ENCODE measurements at regions of chr21 and their contacts with region 1.

Region 1: DNA sequence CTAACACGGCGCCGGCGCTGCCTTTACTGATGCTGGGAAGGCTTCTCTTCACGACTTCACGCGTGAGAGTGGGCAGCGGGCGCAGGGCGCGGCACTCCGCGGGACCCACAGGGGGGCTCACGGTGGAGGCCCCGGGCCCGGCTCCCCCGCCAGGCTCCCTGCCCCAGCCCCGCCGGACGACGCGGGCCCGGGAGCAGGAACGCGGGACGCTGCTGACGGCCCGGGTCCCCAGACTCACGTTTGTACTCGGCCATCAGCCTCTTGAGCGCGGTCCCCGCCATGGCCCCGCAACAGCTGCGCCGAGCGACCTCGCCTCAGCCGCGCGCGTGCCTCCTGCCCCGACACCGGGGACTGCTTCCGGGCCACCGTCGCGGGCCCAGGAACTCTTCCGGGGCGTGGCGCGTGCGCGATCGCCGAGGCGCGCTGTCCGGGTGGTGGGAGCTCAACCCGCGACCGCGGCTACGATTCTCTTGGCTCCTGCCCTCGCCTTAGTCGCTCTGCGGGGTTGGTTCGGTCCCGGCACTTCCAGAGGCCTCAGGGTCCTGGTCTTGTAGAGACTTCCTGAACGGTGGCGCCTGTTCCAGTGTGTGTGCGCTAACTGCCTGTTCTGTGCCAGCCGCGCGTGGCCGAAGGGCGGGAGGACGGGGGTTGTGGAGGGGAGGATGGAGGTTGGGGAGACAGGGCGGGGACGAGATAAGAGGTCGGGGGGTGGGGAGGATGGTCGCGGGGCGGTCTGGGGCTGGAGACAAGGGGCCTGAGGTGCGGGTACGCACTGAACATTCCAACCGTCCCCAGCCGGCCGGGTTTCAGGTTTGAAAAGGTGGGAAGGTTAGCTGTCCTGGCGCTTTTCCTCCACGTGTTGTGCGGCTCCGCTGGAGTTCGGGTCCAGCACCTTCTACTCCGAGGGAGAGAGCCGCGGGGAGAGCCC is at the start of gene UBE2G2:
- DNase-seq: peak; percentile 84
- ATAC-seq: peak; percentile 94
- H3K4me3 Mint-ChIP-seq: peak within 1 kb of the TSS; percentile 99
- H3K27ac Mint-ChIP-seq: peak within 1 kb of the TSS; percentile 95
- H3K4me1 Mint-ChIP-seq: peaks cover 51% of the 10 kb centered on the region
- H3K27me3 Mint-ChIP-seq: no peaks in the 10 kb centered on the region
- CTCF ChIP-seq: peak; percentile 31
- total RNA-seq, gene UBE2G2: 113 to 115 TPM

Region 2: GRCh38 chr21:44510508-44511210 is 291.1 kb before region 1 on chr21:
- CTCF ChIA-PET with region 1: interaction called, 10 read pairs
- POLR2A ChIA-PET with region 1: no interaction called
- intact Hi-C with region 1: no loop called
- DNase-seq: peak; percentile 78
- ATAC-seq: peak; percentile 90
- H3K4me3 Mint-ChIP-seq: peak overlapping the region; percentile 27
- H3K27ac Mint-ChIP-seq: no peak overlapping the region
- H3K4me1 Mint-ChIP-seq: peaks cover 4% of the 10 kb centered on the region
- H3K27me3 Mint-ChIP-seq: no peaks in the 10 kb centered on the region
- CTCF ChIP-seq: peak; percentile 93

Region 3: DNA sequence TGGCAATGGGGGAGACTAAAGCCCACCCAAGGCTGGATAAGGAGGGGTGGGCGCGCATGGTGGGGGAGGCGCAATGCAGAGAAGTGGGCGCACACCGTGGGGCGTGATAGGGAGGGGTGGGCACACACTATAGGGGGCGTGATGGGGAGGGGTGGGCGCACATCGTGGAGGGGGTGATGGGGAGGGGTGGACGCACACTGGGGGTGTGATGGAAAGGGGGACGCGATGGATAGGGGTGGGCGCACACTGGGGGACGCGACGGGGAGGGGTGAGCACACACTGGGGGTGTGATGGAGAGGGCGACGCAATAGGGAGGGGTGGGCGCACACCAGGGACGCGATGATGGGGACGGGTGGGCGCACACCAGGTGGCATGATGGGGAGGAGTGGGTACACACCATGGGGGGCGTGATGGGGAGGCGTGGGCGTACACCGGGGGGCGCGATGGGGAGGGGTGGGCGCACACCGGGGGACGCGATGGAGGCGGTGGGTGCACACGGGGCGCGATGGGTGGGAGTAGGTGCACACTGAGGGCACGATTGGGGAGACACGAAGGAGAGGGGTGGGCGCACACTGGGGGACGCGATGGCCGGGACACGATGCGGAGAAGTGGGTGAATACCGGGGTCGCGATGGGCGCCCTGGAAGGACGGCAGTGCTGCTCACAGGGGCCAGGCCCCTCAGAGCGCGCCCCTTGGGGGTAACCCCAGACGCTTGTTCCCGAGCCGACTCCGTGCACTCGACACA is 15.2 kb after region 1 on chr21:
- CTCF ChIA-PET with region 1: interaction called, 11 read pairs
- POLR2A ChIA-PET with region 1: interaction called, 21 read pairs
- intact Hi-C with region 1: no loop called
- DNase-seq: no peak
- ATAC-seq: no peak
- H3K4me3 Mint-ChIP-seq: peak overlapping the region; percentile 74
- H3K27ac Mint-ChIP-seq: no peak overlapping the region
- H3K4me1 Mint-ChIP-seq: peaks cover 19% of the 10 kb centered on the region
- H3K27me3 Mint-ChIP-seq: no peaks in the 10 kb centered on the region
- CTCF ChIP-seq: no peak

Region 4: GRCh38 chr21:44834936-44835646 is 33.4 kb after region 1 on chr21:
- CTCF ChIA-PET with region 1: no interaction called
- POLR2A ChIA-PET with region 1: no interaction called
- intact Hi-C with region 1: loop called (anchors 2 kb)
- DNase-seq: no peak
- ATAC-seq: no peak
- H3K4me3 Mint-ChIP-seq: no peak overlapping the region
- H3K27ac Mint-ChIP-seq: no peak overlapping the region
- H3K4me1 Mint-ChIP-seq: peaks cover 8% of the 10 kb centered on the region
- H3K27me3 Mint-ChIP-seq: no peaks in the 10 kb centered on the region
- CTCF ChIP-seq: no peak

Region 5: DNA sequence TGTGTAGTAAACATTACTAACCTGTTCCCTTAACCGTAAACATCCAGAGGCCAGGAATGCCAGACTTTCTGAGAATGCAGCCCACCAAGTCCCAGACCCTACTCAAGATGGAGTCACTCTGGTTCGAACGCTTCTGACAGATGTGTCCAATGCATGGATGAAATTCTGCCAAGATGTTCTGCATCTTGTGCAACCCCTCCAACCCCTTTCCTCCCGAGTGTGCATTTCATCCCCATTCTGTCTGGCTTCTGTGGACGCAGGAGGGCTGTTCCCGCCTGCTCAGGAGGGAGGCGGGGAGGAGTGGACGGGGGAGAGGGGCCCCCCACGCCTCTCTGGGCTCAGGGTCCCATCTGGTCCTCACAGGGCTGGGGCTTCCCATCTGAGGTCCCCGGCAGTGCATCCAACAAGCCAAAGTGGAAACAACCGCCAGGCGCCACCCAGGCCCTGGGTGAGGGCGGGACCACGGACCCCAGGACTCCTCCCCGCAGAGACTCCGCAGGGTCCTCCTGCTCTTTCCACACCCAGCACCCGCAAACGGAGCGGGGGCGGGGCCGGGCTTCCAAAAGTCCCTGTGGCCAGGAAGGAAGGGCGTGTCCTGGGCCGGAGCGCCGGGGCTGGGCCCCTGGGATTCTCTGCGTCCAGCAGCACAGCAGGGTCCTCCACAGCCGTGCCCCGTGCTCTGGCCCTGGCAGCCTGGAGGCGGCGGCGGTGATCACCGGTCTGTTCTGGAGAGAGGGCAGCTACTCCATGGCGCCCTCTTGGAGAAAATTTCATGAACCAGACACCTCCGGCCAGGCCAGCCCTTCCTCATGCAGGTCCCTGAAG is 43.9 kb after region 1 on chr21:
- CTCF ChIA-PET with region 1: interaction called, 11 read pairs
- POLR2A ChIA-PET with region 1: interaction called, 3 read pairs
- intact Hi-C with region 1: no loop called
- DNase-seq: peak; percentile 75
- ATAC-seq: peak; percentile 87
- H3K4me3 Mint-ChIP-seq: peak overlapping the region; percentile 71
- H3K27ac Mint-ChIP-seq: peak overlapping the region; percentile 53
- H3K4me1 Mint-ChIP-seq: peaks cover 19% of the 10 kb centered on the region
- H3K27me3 Mint-ChIP-seq: no peaks in the 10 kb centered on the region
- CTCF ChIP-seq: peak; percentile 75

Region 6: DNA sequence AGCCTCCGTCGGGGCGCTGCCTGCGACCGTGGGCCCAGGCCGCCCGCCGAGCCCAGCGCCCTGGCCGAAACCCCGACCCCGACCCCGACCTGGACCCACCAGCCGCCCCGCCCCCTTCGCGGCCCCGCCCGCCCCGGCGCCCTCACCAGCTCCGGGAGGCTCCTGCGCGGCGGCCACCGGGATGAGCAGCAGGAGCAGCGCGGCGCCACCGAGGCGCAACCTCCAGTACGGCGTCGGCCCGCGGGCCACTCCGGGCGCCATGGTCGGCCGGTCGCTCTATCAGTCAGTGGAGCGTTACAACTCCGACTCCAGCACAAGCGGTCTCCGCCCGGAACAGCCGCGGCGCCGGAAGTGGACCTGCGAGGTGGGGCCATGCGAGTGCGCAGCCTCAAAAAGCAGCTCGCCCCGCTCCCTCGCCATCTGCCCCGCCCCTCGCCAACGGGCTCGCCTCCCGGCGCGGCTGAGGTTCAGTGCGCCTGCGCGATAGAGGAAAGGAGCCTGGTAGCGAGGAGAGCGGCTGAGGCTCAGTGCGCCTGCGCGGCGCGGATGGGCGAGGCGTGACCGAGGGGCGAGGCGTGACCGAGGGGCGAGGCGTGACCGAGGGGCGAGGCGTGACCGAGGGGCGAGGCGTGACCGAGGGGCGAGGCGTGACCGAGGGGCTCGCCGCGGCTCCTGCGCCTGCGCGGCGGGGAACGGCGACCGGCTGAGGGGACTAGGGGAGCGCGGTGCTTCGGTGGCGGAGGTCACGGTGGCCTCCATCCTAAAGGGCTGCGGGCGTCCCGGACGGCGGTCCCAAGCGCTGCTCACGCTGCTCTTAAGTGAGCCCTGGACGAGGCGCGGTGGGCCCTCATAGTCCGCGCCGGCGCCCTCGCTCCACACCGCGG is 71.9 kb after region 1 on chr21 and contains the start of gene PTTG1IP:
- CTCF ChIA-PET with region 1: interaction called, 58 read pairs
- POLR2A ChIA-PET with region 1: interaction called, 16 read pairs
- intact Hi-C with region 1: loop called (anchors 2 kb)
- DNase-seq: peak; percentile 99
- ATAC-seq: peak; percentile 89
- H3K4me3 Mint-ChIP-seq: peak within 1 kb of the TSS; percentile 84
- H3K27ac Mint-ChIP-seq: peak within 1 kb of the TSS; percentile 83
- H3K4me1 Mint-ChIP-seq: peaks cover 40% of the 10 kb centered on the region
- H3K27me3 Mint-ChIP-seq: no peaks in the 10 kb centered on the region
- CTCF ChIP-seq: no peak
- total RNA-seq, gene PTTG1IP: 60.7 to 61.8 TPM

Region 7: GRCh38 chr21:44927587-44928461 is 126.1 kb after region 1 on chr21:
- CTCF ChIA-PET with region 1: interaction called, 34 read pairs
- POLR2A ChIA-PET with region 1: interaction called, 6 read pairs
- intact Hi-C with region 1: no loop called
- DNase-seq: peak; percentile 98
- ATAC-seq: peak; percentile 75
- H3K4me3 Mint-ChIP-seq: peak overlapping the region; percentile 78
- H3K27ac Mint-ChIP-seq: peak overlapping the region; percentile 96
- H3K4me1 Mint-ChIP-seq: peaks cover 77% of the 10 kb centered on the region
- H3K27me3 Mint-ChIP-seq: no peaks in the 10 kb centered on the region
- CTCF ChIP-seq: no peak